HepG2 (cell line): ENCODE measurements at regions of chr9 and their contacts with region 1.

Region 1: DNA sequence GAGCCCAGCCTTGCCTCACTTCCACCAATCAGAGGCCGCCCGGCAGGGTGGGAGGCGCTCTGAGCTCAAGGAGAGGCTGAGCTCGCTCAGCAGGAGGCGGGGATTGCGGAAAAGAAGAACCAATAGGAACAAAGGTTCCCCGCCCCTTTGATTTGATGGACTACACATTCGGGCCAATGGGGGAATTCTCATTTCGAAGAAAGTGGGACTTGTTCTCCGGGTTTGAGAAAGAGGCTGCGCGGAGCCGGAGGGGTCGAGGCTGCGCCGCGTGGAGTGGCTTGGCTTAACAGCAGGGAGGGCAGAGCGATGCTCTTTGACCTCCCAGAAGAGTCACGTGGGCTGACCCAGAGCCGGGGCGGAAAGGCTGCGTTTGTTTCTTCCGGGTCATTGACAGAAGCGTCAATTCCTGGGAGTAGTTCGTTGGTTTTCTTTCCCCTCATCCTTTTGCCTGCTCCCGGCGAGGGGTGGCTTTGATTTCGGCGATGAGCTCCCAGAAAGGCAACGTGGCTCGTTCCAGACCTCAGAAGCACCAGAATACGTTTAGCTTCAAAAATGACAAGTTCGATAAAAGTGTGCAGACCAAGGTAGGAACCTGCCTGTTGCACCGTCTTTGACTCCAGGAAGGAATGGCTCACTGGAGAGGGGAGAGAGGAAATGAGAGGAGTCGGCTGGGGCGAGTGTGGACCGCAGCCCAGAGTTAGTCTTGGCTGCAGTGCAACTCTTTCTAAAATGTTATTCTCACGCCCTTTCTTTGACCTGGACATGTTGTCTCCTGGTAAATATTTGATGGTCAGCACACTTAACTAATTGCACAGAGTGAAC is at the start of gene C9orf85:
- DNase-seq: peak; percentile 100
- ATAC-seq: peak; percentile 86
- H3K4me3 ChIP-seq: peak within 1 kb of the TSS; percentile 86 to 99 (median 89)
- H3K27ac ChIP-seq: peak within 1 kb of the TSS; percentile 93
- H3K4me1 ChIP-seq: peaks cover 47% of the 10 kb centered on the region
- H3K27me3 ChIP-seq: no peaks in the 10 kb centered on the region; a peak in 1 of 5 replicates
- CTCF ChIP-seq: no peak
- EP300 ChIP-seq: peak; percentile 7 to 41; a peak in 2 of 4 replicates
- POLR2A ChIP-seq: peak in 1 of 2 experiments; percentile 24; a peak in 1 of 4 replicates
- RAD21 ChIP-seq: no peak
- total RNA-seq, gene C9orf85: 9.9 and 10.1 TPM in 2 replicates

Region 2: DNA sequence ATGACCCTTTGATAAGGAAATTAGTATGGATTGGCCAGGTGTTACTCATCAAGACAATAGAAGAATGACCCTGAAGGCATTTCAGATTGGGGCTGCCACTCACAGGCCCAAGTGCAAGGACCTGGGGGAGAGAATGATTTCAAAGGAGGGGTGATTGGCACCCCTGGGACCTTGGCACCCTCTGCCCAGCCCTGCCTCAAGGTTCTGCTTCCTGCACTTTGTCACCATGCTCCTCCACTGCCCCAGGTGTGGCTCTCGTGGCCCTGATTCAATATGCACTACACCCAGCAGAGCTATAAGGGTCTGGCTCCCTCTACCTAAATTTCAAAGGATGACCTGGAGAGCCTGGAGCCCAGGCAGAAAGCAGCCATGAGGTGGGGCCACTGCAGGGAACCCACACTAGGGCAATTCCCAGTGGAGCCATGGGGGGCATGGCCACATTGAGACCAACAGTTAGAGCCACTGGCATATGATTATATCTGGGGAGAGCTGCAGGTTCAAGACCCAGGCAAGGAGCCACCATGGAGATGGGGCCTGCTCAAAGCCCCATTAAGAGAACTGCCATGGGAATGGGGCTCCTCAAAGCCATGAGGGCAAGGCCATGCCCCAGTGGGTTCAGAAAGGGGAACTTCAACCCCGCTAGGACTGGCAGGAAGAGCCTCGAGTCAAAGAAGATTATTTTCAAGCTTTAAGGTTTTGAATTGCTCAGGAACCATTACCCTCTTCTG is 236.2 kb before region 1 on chr9:
- CTCF ChIA-PET with region 1: no interaction called
- POLR2A ChIA-PET with region 1: no interaction called
- in situ Hi-C with region 1: no loop called
- intact Hi-C with region 1: loop called (anchors 10 kb)
- DNase-seq: no peak
- ATAC-seq: no peak
- H3K4me3 ChIP-seq: no peak overlapping the region
- H3K27ac ChIP-seq: no peak overlapping the region
- H3K4me1 ChIP-seq: peaks cover 59% of the 10 kb centered on the region
- H3K27me3 ChIP-seq: no peaks in the 10 kb centered on the region; a peak in 1 of 5 replicates
- CTCF ChIP-seq: no peak
- EP300 ChIP-seq: no peak
- POLR2A ChIP-seq: no peak
- RAD21 ChIP-seq: no peak

Region 3: DNA sequence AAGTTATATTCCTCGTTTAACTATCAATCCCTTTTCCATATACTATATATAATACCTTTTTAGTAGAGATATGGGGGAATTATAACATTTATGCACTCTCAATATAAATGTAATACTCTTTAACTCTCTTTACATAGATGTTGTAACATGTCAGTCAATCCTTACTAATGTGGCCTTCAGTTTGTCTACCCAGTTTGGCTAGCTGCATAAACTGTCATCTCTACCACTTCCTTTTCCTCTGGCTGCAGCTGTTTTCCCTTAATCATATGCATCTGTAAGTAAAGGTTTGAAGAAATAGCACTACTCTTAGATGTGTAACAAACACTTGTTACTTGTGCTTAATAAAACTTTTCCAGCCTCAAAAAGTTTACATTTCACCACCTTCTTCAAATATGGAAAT is 13.9 kb before region 1 on chr9:
- CTCF ChIA-PET with region 1: no interaction called
- POLR2A ChIA-PET with region 1: interaction called, 11 read pairs
- in situ Hi-C with region 1: no loop called
- intact Hi-C with region 1: no loop called
- DNase-seq: no peak
- ATAC-seq: no peak
- H3K4me3 ChIP-seq: no peak overlapping the region
- H3K27ac ChIP-seq: no peak overlapping the region
- H3K4me1 ChIP-seq: peaks cover 8% of the 10 kb centered on the region
- H3K27me3 ChIP-seq: no peaks in the 10 kb centered on the region
- CTCF ChIP-seq: no peak
- EP300 ChIP-seq: no peak
- POLR2A ChIP-seq: no peak
- RAD21 ChIP-seq: no peak